Left colon (tissue), 2 donors: ENCODE measurements at regions of chr22 and their contacts with region 1.

Region 1: DNA sequence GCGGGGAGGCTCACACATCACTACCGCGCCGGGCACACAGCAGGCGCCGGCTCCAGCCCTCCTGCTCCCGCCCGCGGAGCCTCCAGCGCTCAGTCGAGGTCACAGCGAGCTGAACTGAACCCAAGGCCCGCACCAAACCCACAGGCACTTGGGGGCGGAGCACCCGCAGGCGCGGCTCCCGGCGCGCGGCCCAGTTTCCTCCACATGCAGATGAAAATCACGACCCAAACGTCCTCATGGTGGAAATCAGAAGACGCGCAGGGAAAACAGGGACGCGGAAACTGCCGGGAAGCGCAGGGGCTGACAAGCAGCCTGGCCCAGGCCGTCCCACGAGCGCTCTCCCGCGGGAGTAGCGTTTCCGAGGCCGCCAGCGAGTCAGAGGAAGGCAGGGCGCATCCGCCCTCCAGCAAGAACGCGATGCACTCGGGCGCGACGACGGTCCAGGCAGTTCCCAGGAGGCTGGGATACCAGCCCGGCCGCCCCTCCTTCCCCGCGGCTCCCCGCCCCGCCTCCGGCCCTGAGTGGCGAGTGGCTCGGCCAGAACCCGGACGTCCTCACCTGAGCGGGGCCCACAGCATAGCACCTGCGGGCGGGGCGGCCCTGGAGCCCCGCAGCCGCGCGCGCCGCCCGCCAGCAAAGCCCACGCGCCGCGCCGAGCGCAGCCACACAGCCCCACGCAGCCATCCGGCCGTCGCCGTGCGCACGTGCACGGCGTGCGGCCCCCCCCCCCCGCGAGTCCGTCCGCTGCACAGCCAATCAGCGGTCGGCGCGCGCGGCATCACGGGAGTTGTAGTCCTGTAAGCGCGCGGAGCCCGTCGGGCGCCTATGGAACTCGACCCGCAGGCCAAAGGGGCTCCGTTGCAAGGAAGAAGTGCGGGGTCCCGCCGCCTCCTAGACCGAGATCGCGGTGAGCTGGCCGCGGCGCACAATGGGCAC is at the start of gene HDHD5:
- DNase-seq: peak; percentile 89 to 97
- ATAC-seq: peak; percentile 86
- total RNA-seq, gene HDHD5: 29.0 to 41.8 TPM

Region 2: DNA sequence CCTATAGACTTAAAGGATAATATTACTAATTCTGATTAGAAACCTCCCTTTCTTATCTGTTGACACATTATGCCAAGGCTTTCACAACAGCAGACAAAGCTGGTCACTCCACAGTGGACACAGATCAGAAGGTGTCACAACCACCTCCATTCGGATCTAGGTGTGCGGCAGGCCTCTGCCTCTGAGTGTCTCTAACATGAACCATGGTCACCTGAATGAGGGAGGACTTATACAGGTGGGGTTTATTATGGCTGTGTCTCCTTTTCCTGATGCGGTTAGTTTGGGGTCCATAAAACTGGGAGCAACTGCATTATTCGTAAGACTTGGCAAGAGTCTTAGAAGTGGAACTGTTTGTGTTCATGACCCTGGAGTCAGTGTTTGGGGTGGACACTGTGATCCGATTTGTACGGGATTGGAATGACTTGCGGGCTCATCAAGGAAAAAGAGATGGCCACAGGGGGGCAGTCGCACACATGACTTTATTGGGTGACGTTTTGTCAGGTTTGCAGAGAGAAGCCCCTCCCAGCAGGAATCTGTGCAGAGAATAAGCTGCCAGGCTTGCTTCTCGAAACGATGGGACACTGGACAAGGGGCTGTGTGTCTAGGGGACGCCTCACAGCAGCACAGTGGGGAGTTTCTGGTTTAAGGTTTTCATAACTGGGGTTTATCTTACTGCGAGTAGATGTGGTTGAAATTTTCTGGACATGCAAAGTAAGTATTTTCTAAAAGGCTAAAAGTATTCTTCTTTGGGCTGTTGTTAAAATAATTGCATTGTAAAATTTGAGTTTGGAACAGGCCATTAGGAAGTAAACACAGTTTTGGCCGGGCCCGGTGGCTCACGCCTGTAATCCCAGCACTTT is 241.5 kb before region 1 on chr22:
- intact Hi-C with region 1: no loop called
- DNase-seq: peak in 1 of 2 donors; percentile 69
- ATAC-seq: peak; percentile 51

Region 3: GRCh38 chr22:17095538-17095937 is 63.3 kb before region 1 on chr22:
- intact Hi-C with region 1: loop called in 1 of 2 experiments (anchors 10 kb)
- DNase-seq: no peak
- ATAC-seq: no peak